ENCODE measurements at regions of chr2 and their contacts with region 1.

Region 1: GRCh38 chr2:106582148-106583143 is 95.3 kb downstream of the CD8B2 start:
- DNase-seq: peak; percentile 77 to 86
- ATAC-seq: peak; percentile 95 to 99
- H3K4me3 ChIP-seq: peak overlapping the region; percentile 41
- H3K27ac ChIP-seq: peak overlapping the region in 1 of 2 experiments; percentile 29; a peak in 2 of 6 replicates
- H3K4me1 ChIP-seq: peaks cover 2% of the 10 kb centered on the region; the same call in 1 of the 3 replicates
- CTCF ChIP-seq: peak; percentile 89
- EP300 ChIP-seq: no peak
- POLR2A ChIP-seq: no peak
- RAD21 ChIP-seq: peak; percentile 89 to 90

Region 2: GRCh38 chr2:106104332-106105062 is 477.9 kb before region 1 on chr2:
- CTCF ChIA-PET with region 1: interaction called, 11 read pairs
- POLR2A ChIA-PET with region 1: no interaction called
- DNase-seq: peak; percentile 69 to 75
- ATAC-seq: peak; percentile 67 to 90; a peak in 4 of 6 replicates
- H3K4me3 ChIP-seq: no peak overlapping the region
- H3K27ac ChIP-seq: no peak overlapping the region
- H3K4me1 ChIP-seq: peaks cover 4% of the 10 kb centered on the region; the same call in 2 of the 3 replicates
- CTCF ChIP-seq: peak; percentile 94
- EP300 ChIP-seq: no peak
- POLR2A ChIP-seq: no peak
- RAD21 ChIP-seq: peak; percentile 94 to 96

Region 3: DNA sequence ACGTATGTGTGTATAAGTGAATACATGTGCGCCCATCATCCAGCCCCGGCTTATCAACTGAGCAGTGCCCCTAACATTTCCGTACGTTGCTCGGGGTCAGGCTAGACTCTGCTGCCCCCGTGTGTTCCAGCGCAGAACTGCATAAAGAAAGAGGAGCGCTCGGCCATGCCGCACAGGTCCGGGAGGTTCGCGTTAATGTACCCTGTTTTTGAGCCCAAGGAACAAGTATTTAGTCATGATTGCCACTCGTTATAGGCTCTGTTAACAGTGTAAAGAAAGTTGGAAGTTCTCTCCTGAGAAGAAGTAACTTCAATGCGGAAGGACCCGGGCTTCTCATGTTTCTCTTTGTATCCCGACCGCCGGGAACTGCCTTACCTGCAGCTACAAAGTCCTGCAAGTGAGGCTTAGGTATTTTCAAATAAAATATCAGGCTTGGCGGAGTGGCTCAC is 39.6 kb before region 1 on chr2:
- CTCF ChIA-PET with region 1: interaction called, 14 read pairs
- POLR2A ChIA-PET with region 1: no interaction called
- DNase-seq: peak; percentile 59 to 72
- ATAC-seq: peak; percentile 89 to 98
- H3K4me3 ChIP-seq: peak overlapping the region; percentile 41
- H3K27ac ChIP-seq: peak overlapping the region; percentile 54 to 62; a peak in 4 of 6 replicates
- H3K4me1 ChIP-seq: no peaks in the 10 kb centered on the region
- CTCF ChIP-seq: peak; percentile 89
- EP300 ChIP-seq: no peak
- POLR2A ChIP-seq: no peak
- RAD21 ChIP-seq: peak; percentile 92 to 94

Region 4: DNA sequence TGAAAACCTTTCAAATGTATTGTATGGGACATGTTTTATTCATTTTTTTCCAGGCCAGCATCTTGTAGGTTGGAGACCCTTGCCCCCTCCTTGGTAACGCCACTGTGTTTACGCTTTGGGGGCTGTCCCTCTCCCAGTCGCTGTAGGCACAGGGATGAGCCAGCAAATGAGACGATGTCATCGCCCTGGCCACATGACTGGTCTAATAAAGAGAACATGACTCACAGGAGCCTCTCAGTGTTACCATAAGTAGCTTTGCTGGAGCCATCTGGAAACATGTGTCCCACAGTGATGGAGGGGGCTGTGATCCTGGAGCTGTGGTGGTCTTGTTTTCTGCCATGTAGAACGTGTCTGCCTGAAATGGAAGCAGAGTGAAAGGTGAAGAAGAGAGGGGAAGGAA is 16.4 kb before region 1 on chr2:
- CTCF ChIA-PET with region 1: interaction called, 30 read pairs
- POLR2A ChIA-PET with region 1: no interaction called
- DNase-seq: peak in 1 of 2 experiments; percentile 10
- ATAC-seq: peak; percentile 51 to 69; a peak in 3 of 6 replicates
- H3K4me3 ChIP-seq: no peak overlapping the region
- H3K27ac ChIP-seq: no peak overlapping the region
- H3K4me1 ChIP-seq: peaks cover 3% of the 10 kb centered on the region; the same call in 1 of the 3 replicates
- CTCF ChIP-seq: no peak
- EP300 ChIP-seq: no peak
- POLR2A ChIP-seq: no peak
- RAD21 ChIP-seq: no peak

Region 5: DNA sequence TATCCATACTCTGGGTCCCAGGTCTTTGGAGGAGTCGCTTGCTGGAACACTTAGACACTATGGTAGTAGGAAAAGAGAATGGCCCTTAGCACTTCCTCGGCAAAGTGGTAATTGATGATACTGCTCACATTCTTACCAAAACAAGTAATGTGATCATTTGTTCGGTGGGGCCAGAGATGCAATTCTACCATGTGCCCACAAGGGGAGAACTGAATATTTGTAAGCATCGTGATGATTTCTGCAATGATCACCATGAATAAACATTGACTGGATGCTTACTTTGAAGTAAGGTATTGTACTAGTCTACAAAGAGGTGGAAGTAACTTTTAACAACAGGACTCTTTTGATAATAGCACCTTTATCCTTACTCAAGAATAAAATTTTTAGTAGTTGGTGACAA is 14.4 kb after region 1 on chr2:
- CTCF ChIA-PET with region 1: interaction called, 18 read pairs
- POLR2A ChIA-PET with region 1: no interaction called
- DNase-seq: peak; percentile 29 to 37
- ATAC-seq: peak; percentile 24 to 51; a peak in 4 of 6 replicates
- H3K4me3 ChIP-seq: no peak overlapping the region
- H3K27ac ChIP-seq: no peak overlapping the region
- H3K4me1 ChIP-seq: no peaks in the 10 kb centered on the region
- CTCF ChIP-seq: peak; percentile 20; the same call in 2 of the 3 replicates
- EP300 ChIP-seq: no peak
- POLR2A ChIP-seq: no peak
- RAD21 ChIP-seq: no peak

Region 6: DNA sequence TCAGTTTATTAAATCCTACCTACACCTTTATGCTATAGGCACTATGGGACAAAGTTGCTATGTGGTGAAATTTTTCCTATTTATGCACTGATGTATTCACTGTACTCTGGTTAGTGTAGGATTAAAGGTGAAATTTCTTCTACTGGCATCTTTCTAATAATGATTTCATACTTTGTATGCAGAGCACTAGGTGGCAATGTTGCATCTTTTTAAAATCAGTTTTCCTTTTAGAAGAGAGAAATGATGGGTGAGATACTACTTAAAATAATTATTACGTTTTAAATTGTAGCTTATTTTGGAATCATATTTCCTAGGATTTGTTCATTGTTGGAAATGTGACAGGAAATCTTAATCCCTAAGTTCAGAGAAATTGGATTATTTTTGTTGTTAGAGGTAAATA is 55.6 kb after region 1 on chr2:
- CTCF ChIA-PET with region 1: no interaction called
- POLR2A ChIA-PET with region 1: no interaction called
- DNase-seq: peak in 1 of 2 experiments; percentile 39
- ATAC-seq: peak; percentile 54 to 69; a peak in 5 of 6 replicates
- H3K4me3 ChIP-seq: no peak overlapping the region
- H3K27ac ChIP-seq: no peak overlapping the region
- H3K4me1 ChIP-seq: peaks cover 19% of the 10 kb centered on the region
- CTCF ChIP-seq: peak; percentile 69
- EP300 ChIP-seq: no peak
- POLR2A ChIP-seq: no peak
- RAD21 ChIP-seq: peak; percentile 68 to 86

Region 7: DNA sequence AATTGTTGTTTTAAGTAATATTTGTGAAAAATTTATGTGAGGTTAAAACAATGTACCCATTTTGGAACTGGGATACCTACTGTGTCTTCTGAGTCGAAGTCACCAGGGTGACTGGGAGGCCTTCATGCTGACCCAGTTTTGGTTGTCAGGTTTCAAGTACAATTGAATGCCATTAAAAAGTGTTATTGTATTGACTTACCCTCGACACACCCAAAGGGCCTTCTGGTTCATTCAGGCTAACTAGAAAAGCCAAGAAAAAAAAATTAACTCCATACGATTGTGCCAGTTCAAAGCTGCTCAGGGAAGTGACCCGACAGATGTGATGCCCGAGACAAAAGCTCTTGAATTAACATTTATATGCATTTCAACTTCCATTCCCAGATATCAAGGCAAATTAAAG is 113.5 kb after region 1 on chr2:
- CTCF ChIA-PET with region 1: no interaction called
- POLR2A ChIA-PET with region 1: no interaction called
- DNase-seq: no peak
- ATAC-seq: no peak
- H3K4me3 ChIP-seq: no peak overlapping the region
- H3K27ac ChIP-seq: no peak overlapping the region
- H3K4me1 ChIP-seq: no peaks in the 10 kb centered on the region
- CTCF ChIP-seq: no peak
- EP300 ChIP-seq: no peak
- POLR2A ChIP-seq: no peak
- RAD21 ChIP-seq: no peak